Activated CD4-positive, alpha-beta memory T cell treated with anti-CD3 and anti-CD28 coated beads for 36 hours (primary cell): ENCODE measurements at regions of chr10 and their contacts with region 1.

Region 1: DNA sequence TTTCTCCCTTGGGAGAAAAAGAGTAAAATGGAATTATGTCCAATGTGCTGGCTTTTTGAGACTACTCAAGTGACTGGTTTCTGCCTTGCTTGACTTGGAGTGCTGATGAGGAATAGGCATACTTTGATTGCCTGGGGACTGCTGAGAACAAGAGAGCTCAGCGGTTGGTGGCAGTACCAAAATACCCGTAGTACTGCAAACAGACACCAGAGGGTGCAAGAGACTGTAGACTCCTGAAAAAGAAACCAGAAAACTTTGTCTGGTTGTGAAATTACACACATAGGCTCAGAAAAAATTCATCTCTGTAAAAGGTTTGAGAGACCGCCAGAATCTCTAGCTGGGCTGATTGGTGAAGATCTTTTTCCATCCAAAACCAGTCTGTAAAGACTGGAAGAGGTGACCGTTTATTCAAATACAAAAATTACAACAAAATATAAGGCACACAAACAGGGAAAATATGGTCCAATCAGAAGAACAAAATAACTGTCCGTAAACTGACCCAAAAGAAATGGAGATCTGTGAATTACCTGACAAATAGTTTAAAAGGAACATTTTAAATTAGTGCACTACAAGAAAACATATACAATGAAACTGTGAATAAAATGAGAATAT is 18.5 kb downstream of the BICC1 start:
- DNase-seq: peak; percentile 60
- H3K4me3 Mint-ChIP-seq: no peak overlapping the region
- H3K27ac Mint-ChIP-seq: no peak overlapping the region
- H3K4me1 Mint-ChIP-seq: peaks cover 2% of the 10 kb centered on the region
- H3K27me3 Mint-ChIP-seq: peaks cover 7% of the 10 kb centered on the region

Region 2: DNA sequence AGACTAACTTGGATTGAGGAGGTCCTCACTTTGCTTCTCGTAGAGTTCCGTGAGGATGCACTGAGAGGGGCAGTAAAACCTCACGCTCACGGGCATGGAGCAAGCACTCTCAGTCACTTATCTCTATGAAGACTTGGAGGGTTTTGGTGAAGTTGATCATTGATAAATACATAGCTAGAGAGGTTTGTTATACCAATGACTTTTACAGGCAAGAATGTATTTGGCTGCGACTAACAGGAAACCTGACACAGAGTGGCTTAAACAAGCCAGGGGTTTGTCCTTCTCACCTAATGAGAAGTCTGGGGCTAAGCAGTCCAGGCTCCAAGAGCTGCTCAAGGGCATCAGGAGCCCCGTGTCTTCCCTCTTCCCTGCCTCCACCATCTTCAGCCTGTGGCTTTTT is 12.4 kb before region 1 on chr10:
- CTCF ChIA-PET with region 1: interaction called, 10 read pairs
- POLR2A ChIA-PET with region 1: no interaction called
- intact Hi-C with region 1: no loop called
- DNase-seq: no peak
- H3K4me3 Mint-ChIP-seq: no peak overlapping the region
- H3K27ac Mint-ChIP-seq: no peak overlapping the region
- H3K4me1 Mint-ChIP-seq: peaks cover 8% of the 10 kb centered on the region
- H3K27me3 Mint-ChIP-seq: peaks cover 53% of the 10 kb centered on the region

Region 3: DNA sequence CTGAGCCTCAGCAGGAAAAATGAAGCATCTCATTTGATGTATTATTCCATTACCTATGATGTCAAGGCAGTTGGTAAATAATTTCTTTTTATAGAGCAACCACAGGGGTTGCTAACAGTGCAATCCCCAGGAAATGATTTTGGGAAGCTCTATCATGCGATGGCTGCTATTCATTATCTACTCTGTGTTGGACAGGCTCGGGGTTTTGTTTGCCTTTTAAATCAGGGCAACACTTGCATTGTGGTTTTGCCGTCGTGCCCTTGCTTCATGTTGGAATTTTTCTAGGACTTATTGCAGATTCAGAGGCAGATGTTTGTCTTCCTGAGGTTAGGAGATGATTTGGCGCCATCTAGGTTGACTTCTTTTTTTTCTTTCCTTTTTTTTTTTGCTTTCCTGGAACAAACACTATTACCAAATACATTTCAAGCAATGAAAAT is 109.9 kb after region 1 on chr10:
- CTCF ChIA-PET with region 1: interaction called, 4 read pairs
- POLR2A ChIA-PET with region 1: no interaction called
- intact Hi-C with region 1: loop called (anchors 10 kb)
- DNase-seq: no peak
- H3K4me3 Mint-ChIP-seq: no peak overlapping the region
- H3K27ac Mint-ChIP-seq: no peak overlapping the region
- H3K4me1 Mint-ChIP-seq: no peaks in the 10 kb centered on the region
- H3K27me3 Mint-ChIP-seq: no peaks in the 10 kb centered on the region

Region 4: DNA sequence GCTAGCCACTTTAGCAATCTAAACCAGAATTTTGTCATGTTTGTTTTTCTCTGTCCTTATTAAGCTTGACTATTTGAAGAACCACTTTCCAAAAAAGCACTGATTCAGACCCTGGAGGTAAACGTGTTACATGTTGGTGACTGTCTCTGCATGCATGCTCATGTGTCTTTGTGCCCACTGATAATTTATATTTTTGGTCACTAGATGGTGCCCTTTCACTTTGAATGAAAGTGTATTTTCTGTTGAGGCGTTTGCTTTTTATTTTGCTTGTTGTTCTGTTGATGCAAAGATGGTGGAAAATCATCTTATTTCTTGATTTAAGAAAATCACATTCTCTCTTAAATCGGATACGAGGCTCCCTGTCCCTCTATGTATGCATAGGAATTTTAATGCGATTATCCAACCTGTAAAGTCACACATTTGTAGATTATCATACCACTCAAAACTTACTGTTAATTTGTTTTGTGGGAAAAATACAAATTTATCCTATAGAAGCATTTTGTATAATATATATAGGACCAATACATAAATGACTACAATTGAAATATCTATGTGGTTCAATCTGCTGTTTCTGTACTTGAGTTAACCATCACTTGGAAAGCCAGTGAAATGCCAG is 250.8 kb after region 1 on chr10:
- CTCF ChIA-PET with region 1: interaction called, 4 read pairs
- POLR2A ChIA-PET with region 1: no interaction called
- intact Hi-C with region 1: loop called (anchors 10 kb)
- DNase-seq: no peak
- H3K4me3 Mint-ChIP-seq: no peak overlapping the region
- H3K27ac Mint-ChIP-seq: no peak overlapping the region
- H3K4me1 Mint-ChIP-seq: no peaks in the 10 kb centered on the region
- H3K27me3 Mint-ChIP-seq: peaks cover 3% of the 10 kb centered on the region